Heart right ventricle (tissue), 16 donors: ENCODE measurements at regions of chr17 and their contacts with region 1.

Region 1: DNA sequence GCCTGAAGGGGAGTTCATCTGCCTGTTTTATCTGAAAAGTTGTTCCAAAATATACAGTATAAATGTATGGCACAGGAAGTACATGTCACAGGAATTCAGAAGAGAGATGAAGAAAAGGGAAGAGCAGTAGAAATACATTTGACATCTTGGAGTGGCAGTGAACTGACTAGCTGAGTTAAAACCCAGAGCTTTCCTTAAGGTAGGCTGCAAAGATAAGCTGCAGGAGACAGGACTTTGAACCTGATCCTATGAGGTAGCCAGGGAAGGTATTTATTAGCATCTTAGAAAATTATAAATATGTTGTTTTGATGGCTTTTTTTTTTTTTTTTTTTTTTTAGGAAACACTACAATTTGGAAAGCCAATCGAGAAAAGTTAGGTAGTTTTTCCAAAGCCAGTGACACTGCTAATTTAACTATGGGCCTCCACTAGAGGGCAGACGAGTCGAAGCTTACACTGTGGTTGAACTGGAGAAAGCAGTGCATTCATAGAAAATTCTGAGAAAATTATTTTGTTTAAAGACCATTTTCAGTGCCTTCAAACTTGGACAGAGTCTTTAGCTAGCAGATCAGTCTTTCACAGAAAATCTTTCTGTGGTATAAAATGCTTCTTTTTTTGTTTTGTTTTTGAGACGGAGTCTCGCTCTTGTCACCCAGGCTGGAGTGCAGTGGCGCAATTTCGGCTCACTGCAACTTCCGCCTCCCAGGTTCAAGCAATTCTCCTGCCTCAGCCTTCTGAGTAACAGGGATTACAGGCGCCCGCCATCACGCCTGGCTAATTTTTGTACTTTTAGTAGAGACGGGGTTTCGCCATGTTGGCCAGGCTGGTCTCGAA is 122.3 kb downstream of the SSH2 start:
- DNase-seq: peak in 1 of 2 donors; percentile 67
- ATAC-seq: peak; percentile 46 to 80 (median 72)
- H3K4me3 ChIP-seq: peak overlapping the region in 1 of 10 donors; percentile 37
- H3K27ac ChIP-seq: peak overlapping the region in 1 of 10 donors; percentile 74
- H3K4me1 ChIP-seq: peaks cover 0 to 7% (median 0%) of the 10 kb centered on the region in 9 donors
- H3K27me3 ChIP-seq: no peaks in the 10 kb centered on the region
- CTCF ChIP-seq: peak; percentile 64 to 86 (median 83)

Region 2: GRCh38 chr17:30000001-30000754 is 192.4 kb after region 1 on chr17:
- intact Hi-C with region 1: loop called in 1 of 10 experiments (anchors 10 kb)
- DNase-seq: no peak
- ATAC-seq: no peak
- H3K4me3 ChIP-seq: no peak overlapping the region
- H3K27ac ChIP-seq: no peak overlapping the region
- H3K4me1 ChIP-seq: no peaks in the 10 kb centered on the region
- H3K27me3 ChIP-seq: no peaks in the 10 kb centered on the region
- CTCF ChIP-seq: peak in 1 of 9 donors; percentile 6

Region 3: DNA sequence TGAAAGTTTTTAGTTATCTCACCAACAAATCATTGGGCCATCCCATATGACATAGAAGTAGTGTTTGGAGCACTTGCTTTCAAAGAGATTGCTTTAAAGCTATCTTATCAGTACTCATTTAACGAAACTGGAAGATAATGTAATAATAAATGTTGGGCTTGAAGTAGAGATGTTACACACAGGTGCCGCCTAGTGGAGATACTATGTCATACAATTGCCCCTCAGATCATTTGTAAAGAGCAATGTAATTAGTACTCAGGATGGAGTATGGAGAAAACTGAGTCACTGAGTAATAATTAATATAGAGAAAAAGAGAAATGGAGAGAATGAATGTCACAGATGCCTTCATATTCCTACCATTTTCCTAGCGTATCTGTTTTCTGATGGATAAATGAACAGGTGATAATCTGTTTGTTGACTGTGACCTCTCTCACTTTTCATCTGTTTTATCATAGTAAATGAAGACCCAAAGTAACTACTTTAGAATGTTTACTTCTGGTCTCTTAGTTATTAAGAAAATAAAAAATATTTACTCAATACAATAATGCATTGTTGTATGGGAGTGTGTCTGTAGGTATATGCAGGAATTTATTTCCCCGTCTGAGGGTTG is 214.1 kb after region 1 on chr17:
- intact Hi-C with region 1: loop called in 6 of 10 experiments (anchors 2 to 10 kb)
- DNase-seq: no peak
- ATAC-seq: no peak
- H3K4me3 ChIP-seq: no peak overlapping the region
- H3K27ac ChIP-seq: no peak overlapping the region
- H3K4me1 ChIP-seq: no peaks in the 10 kb centered on the region
- H3K27me3 ChIP-seq: peaks cover 0 to 6% (median 0%) of the 10 kb centered on the region in 7 donors
- CTCF ChIP-seq: peak; percentile 53 to 84 (median 74)